ENCODE measurements at regions of chr12 and their contacts with region 1.

Region 1: DNA sequence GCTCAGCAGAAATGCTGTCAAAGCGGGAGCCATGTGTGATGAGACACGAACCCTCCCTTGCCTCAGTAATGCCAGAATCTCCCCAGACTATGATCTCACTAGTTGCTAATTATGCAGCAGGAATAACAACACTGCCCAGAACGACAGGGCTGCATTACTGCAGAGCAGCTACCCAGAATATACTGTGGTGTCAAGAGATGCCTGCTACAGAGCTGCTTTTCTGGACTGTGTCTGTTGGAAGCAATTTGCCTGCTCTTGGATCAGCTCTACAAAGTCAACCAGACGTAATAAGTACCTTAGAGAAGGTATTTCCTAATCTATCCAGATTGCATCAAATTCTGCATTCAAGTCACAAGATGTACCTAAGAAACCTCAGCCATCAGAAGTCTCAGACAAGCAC is 5.4 kb downstream of the CSRNP2 start:
- DNase-seq: no peak
- ATAC-seq: no peak
- H3K4me3 ChIP-seq: no peak overlapping the region
- H3K27ac ChIP-seq: no peak overlapping the region
- H3K4me1 ChIP-seq: peaks cover 10 to 12% of the 10 kb centered on the region in 2 experiments; a peak in 3 of 5 replicates
- H3K27me3 ChIP-seq: no peaks in the 10 kb centered on the region
- CTCF ChIP-seq: no peak
- EP300 ChIP-seq: no peak
- POLR2A ChIP-seq: no peak
- RAD21 ChIP-seq: no peak

Region 2: DNA sequence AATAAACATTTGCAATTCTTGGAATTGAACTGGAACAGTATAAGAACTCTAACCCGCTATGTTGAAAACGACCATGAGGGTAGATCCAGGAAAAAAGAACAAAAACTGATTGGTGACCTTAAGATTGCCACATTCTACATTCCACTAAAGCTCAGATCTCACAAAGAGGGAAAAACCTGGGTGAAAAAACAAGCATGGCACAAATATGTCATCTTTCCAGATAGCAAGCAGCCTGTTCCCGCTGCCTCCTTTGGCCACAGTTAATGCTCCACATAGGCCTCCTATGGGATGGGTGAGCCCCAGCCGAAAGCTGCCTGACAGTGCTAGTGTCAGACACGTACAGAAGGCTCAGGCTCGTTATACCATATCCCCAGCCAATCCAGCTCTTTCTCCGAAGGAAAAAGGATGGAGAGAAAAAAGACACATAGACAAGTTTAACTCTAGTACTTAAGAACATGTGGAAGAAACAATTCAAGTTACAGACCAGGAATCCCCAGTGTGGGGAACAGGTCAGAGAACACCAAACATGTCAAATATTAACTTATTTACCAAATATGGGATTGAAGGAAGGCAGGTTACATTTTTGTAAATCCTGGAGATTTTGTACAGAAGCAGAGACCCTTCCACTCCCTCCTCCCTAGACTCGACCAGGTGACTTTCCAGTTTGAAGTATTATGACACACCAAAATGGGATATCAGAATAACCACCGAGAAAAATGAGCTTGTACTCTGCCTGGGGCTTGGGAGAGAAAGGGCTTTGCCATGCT is 15.2 kb before region 1 on chr12:
- CTCF ChIA-PET with region 1: no interaction called
- POLR2A ChIA-PET with region 1: interaction called, 25 read pairs
- in situ Hi-C with region 1: no loop called
- intact Hi-C with region 1: no loop called
- DNase-seq: no peak
- ATAC-seq: peak; percentile 41; the same call in 1 of the 3 replicates
- H3K4me3 ChIP-seq: no peak overlapping the region
- H3K27ac ChIP-seq: no peak overlapping the region
- H3K4me1 ChIP-seq: peaks cover 5% of the 10 kb centered on the region in 2 experiments; a peak in 3 of 5 replicates
- H3K27me3 ChIP-seq: no peaks in the 10 kb centered on the region
- CTCF ChIP-seq: no peak
- EP300 ChIP-seq: no peak
- POLR2A ChIP-seq: no peak
- RAD21 ChIP-seq: no peak